H1 (cell line): ENCODE measurements at regions of chr12 and their contacts with region 1.

Region 1: GRCh38 chr12:59322473-59322872 is 273.4 kb upstream of the SLC16A7 start:
- DNase-seq: no peak
- H3K4me3 ChIP-seq: peak overlapping the region in 2 of 4 experiments; percentile 8 to 33; a peak in 2 of 8 replicates
- H3K27ac ChIP-seq: no peak overlapping the region
- H3K4me1 ChIP-seq: peaks cover 2 to 9% (median 6%) of the 10 kb centered on the region in 4 experiments; a peak in 5 of 7 replicates
- H3K27me3 ChIP-seq: no peaks in the 10 kb centered on the region
- CTCF ChIP-seq: no peak
- EP300 ChIP-seq: no peak
- POLR2A ChIP-seq: peak; percentile 51 to 59; a peak in 2 of 3 replicates
- RAD21 ChIP-seq: no peak

Region 2: GRCh38 chr12:59240048-59240447 is 82.4 kb before region 1 on chr12:
- CTCF ChIA-PET with region 1: no interaction called
- POLR2A ChIA-PET with region 1: no interaction called
- DNase-seq: no peak
- H3K4me3 ChIP-seq: no peak overlapping the region
- H3K27ac ChIP-seq: no peak overlapping the region
- H3K4me1 ChIP-seq: peaks cover 0 to 5% (median 0%) of the 10 kb centered on the region in 4 experiments; a peak in 1 of 7 replicates
- H3K27me3 ChIP-seq: no peaks in the 10 kb centered on the region; a peak in 1 of 7 replicates
- CTCF ChIP-seq: no peak
- EP300 ChIP-seq: no peak
- POLR2A ChIP-seq: no peak
- RAD21 ChIP-seq: no peak

Region 3: DNA sequence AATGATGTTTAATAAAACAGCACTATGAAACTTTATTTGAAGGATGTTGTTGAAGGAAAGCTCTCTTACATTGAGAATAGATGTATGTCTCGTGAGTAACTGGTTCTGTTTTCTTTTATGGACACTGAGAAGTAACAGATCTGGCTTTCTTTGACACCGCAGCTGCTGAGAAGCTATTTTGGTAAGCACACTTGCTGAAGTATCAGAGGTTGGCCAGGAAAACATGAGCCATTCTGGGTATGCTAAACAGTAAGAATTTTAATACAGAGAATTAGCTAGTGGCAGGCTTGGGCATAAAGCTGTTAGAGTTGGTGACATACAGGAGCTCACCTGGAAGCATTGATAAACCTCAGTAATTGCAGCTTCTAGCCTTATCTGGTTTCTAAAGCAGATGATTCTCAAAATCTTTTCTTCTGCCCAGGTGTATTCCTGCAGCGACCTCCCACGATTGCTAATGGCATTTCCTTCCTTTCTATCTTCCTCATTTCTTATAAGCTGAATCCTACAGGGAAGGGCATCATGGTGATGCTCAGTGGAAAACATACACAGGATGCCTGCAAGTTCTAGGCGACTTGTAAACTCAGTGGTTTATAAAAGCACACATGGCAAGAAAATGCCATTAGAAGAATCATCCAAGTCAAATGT is 18.3 kb before region 1 on chr12:
- CTCF ChIA-PET with region 1: interaction called, 6 read pairs
- POLR2A ChIA-PET with region 1: interaction called, 23 read pairs
- DNase-seq: no peak
- H3K4me3 ChIP-seq: no peak overlapping the region
- H3K27ac ChIP-seq: no peak overlapping the region
- H3K4me1 ChIP-seq: no peaks in the 10 kb centered on the region
- H3K27me3 ChIP-seq: no peaks in the 10 kb centered on the region
- CTCF ChIP-seq: no peak
- EP300 ChIP-seq: no peak
- POLR2A ChIP-seq: no peak
- RAD21 ChIP-seq: peak; percentile 39 to 42; a peak in 3 of 4 replicates